ENCODE measurements at regions of chr20 and their contacts with region 1.

Region 1: DNA sequence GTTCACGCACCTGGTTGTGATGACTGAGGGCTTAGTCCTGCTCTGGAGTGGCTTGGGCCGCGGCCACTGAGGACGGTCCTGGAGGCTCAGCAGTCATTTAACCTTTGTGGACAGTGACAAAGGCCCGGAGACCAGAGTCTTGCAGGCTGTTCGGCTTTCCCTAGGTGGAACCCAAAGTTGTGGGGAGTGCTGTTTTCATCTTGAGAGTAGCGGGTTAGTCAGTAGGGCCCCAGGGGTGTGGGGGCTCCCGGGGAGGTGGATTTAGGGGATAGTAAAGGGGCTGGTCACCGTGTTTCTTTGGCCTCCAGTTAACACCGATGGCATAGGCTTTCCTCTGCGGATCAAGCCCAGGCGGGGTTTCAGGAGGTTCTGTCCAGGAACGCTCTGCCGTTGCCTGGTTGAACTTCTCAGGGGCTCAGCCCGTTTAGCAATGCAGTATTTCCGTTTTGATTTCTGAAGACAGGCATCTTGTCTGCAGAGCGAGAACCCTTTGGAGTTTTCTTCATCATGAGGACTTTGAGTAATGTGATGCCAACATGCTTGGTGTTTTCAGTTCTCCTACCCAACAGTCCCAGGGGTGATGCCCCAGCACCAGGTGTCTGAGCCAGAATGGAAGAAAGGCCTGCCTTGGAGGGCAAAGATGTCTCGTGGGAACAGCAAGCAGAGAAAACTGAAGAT is 31.8 kb downstream of the ZNF831 start:
- DNase-seq: no peak
- ATAC-seq: no peak
- H3K4me3 ChIP-seq: no peak overlapping the region
- H3K27ac ChIP-seq: no peak overlapping the region
- H3K4me1 ChIP-seq: no peaks in the 10 kb centered on the region
- H3K27me3 ChIP-seq: peaks cover 0 to 26% (median 11%) of the 10 kb centered on the region in 9 donors
- CTCF ChIP-seq: no peak
- POLR2A ChIP-seq: no peak

Region 2: GRCh38 chr20:59102841-59103299 is 92.6 kb before region 1 on chr20:
- intact Hi-C with region 1: loop called in 1 of 10 experiments (anchors 5 kb)
- DNase-seq: no peak
- ATAC-seq: no peak
- H3K4me3 ChIP-seq: no peak overlapping the region
- H3K27ac ChIP-seq: no peak overlapping the region
- H3K4me1 ChIP-seq: peaks cover 0 to 4% (median 0%) of the 10 kb centered on the region in 12 donors
- H3K27me3 ChIP-seq: peaks cover 0 to 11% (median 0%) of the 10 kb centered on the region in 9 donors
- CTCF ChIP-seq: no peak
- POLR2A ChIP-seq: no peak

Measured in heart left ventricle (tissue), 16 donors.